Heart left ventricle (tissue), 16 donors: ENCODE measurements at regions of chr6 and their contacts with region 1.

Region 1: GRCh38 chr6:38493931-38494547 is 145.7 kb downstream of the BTBD9 start:
- DNase-seq: peak in 4 of 5 donors; percentile 47 to 69 (median 56)
- ATAC-seq: peak in 2 of 4 donors; percentile 41 to 51
- H3K4me3 ChIP-seq: no peak overlapping the region
- H3K27ac ChIP-seq: no peak overlapping the region
- H3K4me1 ChIP-seq: no peaks in the 10 kb centered on the region
- H3K27me3 ChIP-seq: no peaks in the 10 kb centered on the region
- CTCF ChIP-seq: peak; percentile 90 to 99 (median 95)
- POLR2A ChIP-seq: no peak

Region 2: DNA sequence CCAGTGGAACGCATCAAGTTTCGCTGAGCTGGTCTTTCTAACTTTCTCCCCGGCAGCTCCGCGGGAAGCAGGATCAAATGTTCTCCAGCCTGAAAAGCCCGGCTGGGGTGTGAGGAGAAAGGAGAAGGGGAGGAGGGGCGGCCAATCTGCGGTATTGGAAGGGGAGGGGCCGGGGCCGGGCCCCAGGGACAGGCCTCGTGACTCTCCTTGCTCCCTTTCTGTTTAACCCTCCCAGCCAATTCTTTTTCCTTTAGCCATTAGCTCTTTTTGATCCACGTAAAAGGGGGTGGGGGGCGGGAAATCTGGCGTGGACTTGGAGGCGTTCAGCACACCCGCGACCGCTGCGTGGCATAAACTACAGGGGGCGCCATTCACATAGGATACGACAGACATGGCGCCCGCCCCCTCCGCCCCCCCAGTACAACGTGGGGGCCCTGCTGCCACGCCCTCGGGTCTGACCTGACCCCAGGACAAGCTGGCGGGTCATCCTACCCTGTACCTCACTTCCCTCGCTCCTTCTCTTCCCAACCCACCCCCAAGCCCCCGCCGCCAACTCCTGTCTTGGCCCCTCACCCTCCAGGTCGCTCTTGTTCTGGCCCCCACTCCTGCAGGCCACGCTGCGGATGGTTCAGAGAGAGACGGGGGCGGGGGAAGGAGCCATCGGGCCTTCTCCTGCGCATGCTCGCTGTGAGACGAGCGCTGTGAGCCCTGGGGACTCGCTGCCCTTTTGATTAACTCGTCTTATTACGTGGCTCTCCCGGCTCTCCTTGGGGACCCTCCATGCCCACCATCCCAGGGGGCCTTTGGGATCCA is 788.6 kb before region 1 on chr6:
- intact Hi-C with region 1: loop called in 6 of 10 experiments (anchors 2 to 10 kb)
- DNase-seq: peak; percentile 81 to 88 (median 86)
- ATAC-seq: peak; percentile 87 to 94 (median 92)
- H3K4me3 ChIP-seq: peak overlapping the region; percentile 37 to 68 (median 56)
- H3K27ac ChIP-seq: peak overlapping the region; percentile 64 to 83 (median 77)
- H3K4me1 ChIP-seq: peaks cover 0 to 17% (median 7%) of the 10 kb centered on the region in 12 donors
- H3K27me3 ChIP-seq: no peaks in the 10 kb centered on the region
- CTCF ChIP-seq: peak; percentile 54 to 83 (median 74)
- POLR2A ChIP-seq: no peak

Region 3: GRCh38 chr6:37791156-37791919 is 702.7 kb before region 1 on chr6:
- intact Hi-C with region 1: loop called in 9 of 10 experiments (anchors 2 to 10 kb)
- DNase-seq: peak; percentile 91 to 95 (median 94)
- ATAC-seq: peak; percentile 97 to 99 (median 99)
- H3K4me3 ChIP-seq: no peak overlapping the region
- H3K27ac ChIP-seq: no peak overlapping the region
- H3K4me1 ChIP-seq: peaks cover 0 to 20% (median 9%) of the 10 kb centered on the region in 12 donors
- H3K27me3 ChIP-seq: no peaks in the 10 kb centered on the region
- CTCF ChIP-seq: peak; percentile 91 to 98 (median 94)
- POLR2A ChIP-seq: no peak

Region 4: GRCh38 chr6:38034274-38034914 is 459.6 kb before region 1 on chr6:
- intact Hi-C with region 1: loop called in 9 of 10 experiments (anchors 2 to 10 kb)
- DNase-seq: no peak
- ATAC-seq: no peak
- H3K4me3 ChIP-seq: no peak overlapping the region
- H3K27ac ChIP-seq: no peak overlapping the region
- H3K4me1 ChIP-seq: peaks cover 0 to 37% (median 18%) of the 10 kb centered on the region in 12 donors
- H3K27me3 ChIP-seq: no peaks in the 10 kb centered on the region
- CTCF ChIP-seq: peak in 11 of 12 donors; percentile 16 to 69 (median 50)
- POLR2A ChIP-seq: no peak

Region 5: DNA sequence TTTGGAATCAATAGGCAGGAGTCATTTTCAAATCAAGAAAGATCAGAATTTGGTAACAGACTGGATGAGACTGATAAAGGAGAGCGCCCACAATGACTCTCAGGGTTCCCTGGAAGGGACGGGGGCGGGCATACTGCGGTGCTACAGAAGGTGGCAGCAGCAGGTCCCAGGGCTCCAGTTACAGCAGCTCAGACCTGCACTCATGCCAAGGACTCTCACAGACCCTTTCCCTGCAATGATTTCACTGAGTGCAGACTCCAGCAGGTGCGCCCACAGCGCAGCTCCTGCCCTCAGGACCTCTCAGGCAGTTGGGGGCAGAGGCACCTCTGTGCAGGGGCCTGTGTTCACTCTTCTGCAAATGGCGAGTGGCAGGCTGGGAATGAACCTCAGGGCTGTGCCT is 314.7 kb before region 1 on chr6:
- intact Hi-C with region 1: loop called in 1 of 10 experiments (anchors 10 kb)
- DNase-seq: peak in 1 of 5 donors; percentile 24
- ATAC-seq: no peak
- H3K4me3 ChIP-seq: no peak overlapping the region
- H3K27ac ChIP-seq: no peak overlapping the region
- H3K4me1 ChIP-seq: peaks cover 0 to 3% (median 0%) of the 10 kb centered on the region in 12 donors
- H3K27me3 ChIP-seq: no peaks in the 10 kb centered on the region
- CTCF ChIP-seq: peak in 1 of 12 donors; percentile 15
- POLR2A ChIP-seq: no peak

Region 6: GRCh38 chr6:38755874-38756273 is 261.8 kb after region 1 on chr6:
- intact Hi-C with region 1: no loop called
- DNase-seq: no peak
- ATAC-seq: no peak
- H3K4me3 ChIP-seq: no peak overlapping the region
- H3K27ac ChIP-seq: no peak overlapping the region
- H3K4me1 ChIP-seq: no peaks in the 10 kb centered on the region
- H3K27me3 ChIP-seq: peaks cover 0 to 3% (median 0%) of the 10 kb centered on the region in 9 donors
- CTCF ChIP-seq: no peak
- POLR2A ChIP-seq: no peak